ENCODE measurements at regions of chr11 and their contacts with region 1.

Region 1: DNA sequence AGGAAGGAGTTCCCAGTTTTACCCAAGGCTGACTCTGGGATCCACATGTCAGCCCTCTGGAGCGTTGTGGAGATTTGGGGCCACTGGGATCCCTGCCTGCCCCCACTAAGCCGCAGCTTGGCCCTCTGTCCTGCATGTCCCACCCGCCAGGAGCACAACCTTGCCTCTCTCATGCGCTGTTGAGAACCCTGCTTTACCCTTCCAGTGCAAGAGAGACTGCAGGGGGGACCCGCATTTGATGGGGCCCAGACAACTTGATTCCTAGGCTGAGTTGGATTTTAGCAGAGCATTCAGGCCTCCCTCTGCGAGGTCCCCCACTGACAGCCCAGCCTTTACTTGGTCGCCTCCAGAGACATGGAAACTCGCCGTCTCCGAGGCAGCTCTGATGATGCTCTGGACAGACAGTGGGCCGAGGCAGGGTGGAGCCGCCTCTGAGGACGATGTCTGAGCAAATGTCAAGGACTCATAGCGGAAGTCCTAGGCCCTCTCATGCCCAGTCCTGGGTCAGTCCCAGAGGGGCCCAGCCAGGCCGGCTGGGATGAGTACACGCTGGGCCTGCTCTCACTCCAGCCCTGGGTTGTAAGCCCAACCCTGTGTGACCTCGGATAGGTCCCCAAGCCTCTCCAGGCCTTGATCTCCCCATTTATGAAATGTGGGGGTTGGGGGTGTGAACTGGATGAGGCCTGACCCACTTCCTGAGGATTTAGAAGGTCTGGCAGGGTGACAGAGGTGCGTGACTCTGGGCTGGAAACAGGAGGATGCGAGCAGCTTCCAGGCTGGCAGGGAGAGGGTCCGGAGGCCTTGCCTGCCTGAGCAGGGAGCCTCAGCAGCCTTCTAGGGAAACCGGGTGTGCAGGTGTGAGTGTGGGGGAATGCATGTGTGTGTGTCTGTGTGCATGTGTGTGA is 630 bp downstream of the CD5 start:
- DNase-seq: peak; percentile 34 to 63 (median 47)
- H3K4me3 ChIP-seq: peak overlapping the region; percentile 99 to 100
- H3K4me3 Mint-ChIP-seq: no peak overlapping the region
- H3K27ac ChIP-seq: peak overlapping the region; percentile 100
- H3K27ac Mint-ChIP-seq: no peak overlapping the region
- H3K4me1 ChIP-seq: peaks cover 64% of the 10 kb centered on the region
- H3K4me1 Mint-ChIP-seq: peaks cover 0 to 47% (median 28%) of the 10 kb centered on the region in 4 donors
- H3K27me3 ChIP-seq: no peaks in the 10 kb centered on the region
- H3K27me3 Mint-ChIP-seq: no peaks in the 10 kb centered on the region

Region 2: GRCh38 chr11:60978546-60979380 is 124.2 kb before region 1 on chr11:
- CTCF ChIA-PET with region 1: no interaction called
- POLR2A ChIA-PET with region 1: interaction called, 12 read pairs
- intact Hi-C with region 1: no loop called
- DNase-seq: peak; percentile 49 to 82 (median 52)
- H3K4me3 ChIP-seq: peak overlapping the region in 1 of 2 donors; percentile 28
- H3K4me3 Mint-ChIP-seq: peak overlapping the region; percentile 81 to 98 (median 86)
- H3K27ac ChIP-seq: peak overlapping the region; percentile 92
- H3K27ac Mint-ChIP-seq: peak overlapping the region; percentile 88 to 100 (median 97)
- H3K4me1 ChIP-seq: peaks cover 91% of the 10 kb centered on the region
- H3K4me1 Mint-ChIP-seq: peaks cover 55 to 98% (median 77%) of the 10 kb centered on the region in 4 donors
- H3K27me3 ChIP-seq: no peaks in the 10 kb centered on the region
- H3K27me3 Mint-ChIP-seq: no peaks in the 10 kb centered on the region

Region 3: GRCh38 chr11:61061081-61061826 is 41.7 kb before region 1 on chr11:
- CTCF ChIA-PET with region 1: no interaction called
- POLR2A ChIA-PET with region 1: interaction called, 11 read pairs
- intact Hi-C with region 1: loop called (anchors 5 kb)
- DNase-seq: peak; percentile 60 to 97 (median 65)
- H3K4me3 ChIP-seq: peak overlapping the region; percentile 17 to 48
- H3K4me3 Mint-ChIP-seq: peak overlapping the region; percentile 72 to 93 (median 86)
- H3K27ac ChIP-seq: peak overlapping the region; percentile 69
- H3K27ac Mint-ChIP-seq: peak overlapping the region; percentile 94 to 99 (median 97)
- H3K4me1 ChIP-seq: peaks cover 75% of the 10 kb centered on the region
- H3K4me1 Mint-ChIP-seq: peaks cover 59 to 91% (median 66%) of the 10 kb centered on the region in 4 donors
- H3K27me3 ChIP-seq: no peaks in the 10 kb centered on the region
- H3K27me3 Mint-ChIP-seq: no peaks in the 10 kb centered on the region

Region 4: DNA sequence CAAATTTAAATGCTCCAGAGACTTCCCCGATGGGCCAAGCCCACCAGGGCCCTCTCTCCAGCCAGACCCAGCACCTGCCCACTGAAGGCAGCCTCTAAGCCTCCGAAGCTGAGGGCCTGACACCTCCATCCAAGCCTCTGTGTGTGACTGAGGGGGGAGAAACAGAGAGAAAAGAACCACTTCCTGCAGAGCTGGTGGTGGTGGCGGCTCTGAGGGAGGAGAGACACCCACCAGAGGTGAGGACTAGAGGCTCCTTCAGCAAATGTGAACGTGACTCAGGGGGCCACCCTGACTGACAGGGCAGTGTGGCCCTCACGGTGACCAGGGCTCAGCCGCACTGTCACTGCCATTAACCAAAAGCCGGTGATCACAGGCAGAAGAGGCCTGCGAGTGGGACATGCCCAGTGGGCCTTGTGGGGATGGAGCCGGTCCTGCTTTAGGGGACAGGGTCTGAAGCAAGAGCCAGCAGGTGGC is 31.7 kb before region 1 on chr11:
- CTCF ChIA-PET with region 1: interaction called, 3 read pairs
- POLR2A ChIA-PET with region 1: interaction called, 107 read pairs
- intact Hi-C with region 1: no loop called
- DNase-seq: peak; percentile 61 to 77 (median 72)
- H3K4me3 ChIP-seq: peak overlapping the region in 1 of 2 donors; percentile 21
- H3K4me3 Mint-ChIP-seq: peak overlapping the region; percentile 60 to 89 (median 79)
- H3K27ac ChIP-seq: peak overlapping the region; percentile 63
- H3K27ac Mint-ChIP-seq: peak overlapping the region; percentile 92 to 98 (median 96)
- H3K4me1 ChIP-seq: peaks cover 98% of the 10 kb centered on the region
- H3K4me1 Mint-ChIP-seq: peaks cover 50 to 92% (median 74%) of the 10 kb centered on the region in 4 donors
- H3K27me3 ChIP-seq: no peaks in the 10 kb centered on the region
- H3K27me3 Mint-ChIP-seq: no peaks in the 10 kb centered on the region

Region 5: GRCh38 chr11:61091373-61092279 is 11.3 kb before region 1 on chr11:
- CTCF ChIA-PET with region 1: interaction called, 3 read pairs
- POLR2A ChIA-PET with region 1: interaction called, 68 read pairs
- intact Hi-C with region 1: no loop called
- DNase-seq: peak in 1 of 5 donors; percentile 74
- H3K4me3 ChIP-seq: peak overlapping the region in 1 of 2 donors; percentile 16
- H3K4me3 Mint-ChIP-seq: peak overlapping the region; percentile 71 to 89 (median 80)
- H3K27ac ChIP-seq: peak overlapping the region; percentile 87
- H3K27ac Mint-ChIP-seq: peak overlapping the region; percentile 95 to 99 (median 97)
- H3K4me1 ChIP-seq: peaks cover 52% of the 10 kb centered on the region
- H3K4me1 Mint-ChIP-seq: peaks cover 44 to 75% (median 50%) of the 10 kb centered on the region in 4 donors
- H3K27me3 ChIP-seq: no peaks in the 10 kb centered on the region
- H3K27me3 Mint-ChIP-seq: no peaks in the 10 kb centered on the region

Region 6: DNA sequence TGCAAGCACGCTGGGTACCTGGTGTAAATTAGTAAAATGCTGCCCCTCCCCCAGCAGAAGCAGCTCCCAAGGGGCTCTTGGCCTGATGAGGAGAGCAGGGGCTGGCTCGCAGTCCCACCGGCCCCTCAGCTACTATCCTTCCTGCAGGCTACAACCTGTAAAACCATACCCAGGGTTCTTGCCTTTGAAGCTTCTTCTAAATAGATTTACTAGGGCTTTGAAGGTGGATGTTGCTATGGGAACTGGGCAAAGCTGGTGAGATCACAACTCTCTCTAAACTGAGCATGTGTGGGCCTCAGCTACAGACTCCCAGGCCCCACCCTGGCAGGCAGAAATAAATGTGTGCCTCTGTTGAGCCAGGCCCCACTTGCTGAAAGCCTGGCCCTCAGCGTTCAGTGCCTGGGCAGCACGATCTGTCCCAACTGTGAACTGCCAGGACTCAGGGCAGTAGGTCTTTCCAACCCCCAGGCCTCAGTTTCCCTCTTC is 17.8 kb after region 1 on chr11:
- CTCF ChIA-PET with region 1: interaction called, 3 read pairs
- POLR2A ChIA-PET with region 1: interaction called, 28 read pairs
- intact Hi-C with region 1: no loop called
- DNase-seq: peak; percentile 74 to 85 (median 78)
- H3K4me3 ChIP-seq: peak overlapping the region in 1 of 2 donors; percentile 10
- H3K4me3 Mint-ChIP-seq: peak overlapping the region; percentile 65 to 83 (median 77)
- H3K27ac ChIP-seq: peak overlapping the region; percentile 70
- H3K27ac Mint-ChIP-seq: peak overlapping the region; percentile 95 to 99 (median 98)
- H3K4me1 ChIP-seq: peaks cover 63% of the 10 kb centered on the region
- H3K4me1 Mint-ChIP-seq: peaks cover 41 to 56% (median 50%) of the 10 kb centered on the region in 4 donors
- H3K27me3 ChIP-seq: no peaks in the 10 kb centered on the region
- H3K27me3 Mint-ChIP-seq: no peaks in the 10 kb centered on the region

Region 7: GRCh38 chr11:61152816-61153592 is 50.1 kb after region 1 on chr11:
- CTCF ChIA-PET with region 1: no interaction called
- POLR2A ChIA-PET with region 1: no interaction called
- intact Hi-C with region 1: no loop called
- DNase-seq: no peak
- H3K4me3 ChIP-seq: no peak overlapping the region
- H3K4me3 Mint-ChIP-seq: peak overlapping the region in 1 of 8 donors; percentile 22
- H3K27ac ChIP-seq: no peak overlapping the region
- H3K27ac Mint-ChIP-seq: no peak overlapping the region
- H3K4me1 ChIP-seq: no peaks in the 10 kb centered on the region
- H3K4me1 Mint-ChIP-seq: peaks cover 4 to 12% (median 5%) of the 10 kb centered on the region in 4 donors
- H3K27me3 ChIP-seq: no peaks in the 10 kb centered on the region
- H3K27me3 Mint-ChIP-seq: no peaks in the 10 kb centered on the region

Region 8: GRCh38 chr11:61256710-61257482 is 154.0 kb after region 1 on chr11:
- CTCF ChIA-PET with region 1: no interaction called
- POLR2A ChIA-PET with region 1: no interaction called
- intact Hi-C with region 1: no loop called
- DNase-seq: no peak
- H3K4me3 ChIP-seq: no peak overlapping the region
- H3K4me3 Mint-ChIP-seq: no peak overlapping the region
- H3K27ac ChIP-seq: no peak overlapping the region
- H3K27ac Mint-ChIP-seq: no peak overlapping the region
- H3K4me1 ChIP-seq: no peaks in the 10 kb centered on the region
- H3K4me1 Mint-ChIP-seq: no peaks in the 10 kb centered on the region
- H3K27me3 ChIP-seq: no peaks in the 10 kb centered on the region
- H3K27me3 Mint-ChIP-seq: peaks cover 2 to 4% of the 10 kb centered on the region in 2 donors

Measured in CD4-positive, alpha-beta memory T cell (primary cell).